SK-N-SH (cell line): ENCODE measurements at regions of chr6 and their contacts with region 1.

Region 1: GRCh38 chr6:13643125-13643524 is 28.0 kb downstream of the NOL7 start:
- DNase-seq: no peak
- H3K4me3 ChIP-seq: no peak overlapping the region
- H3K27ac ChIP-seq: no peak overlapping the region
- H3K4me1 ChIP-seq: no peaks in the 10 kb centered on the region; a peak in 2 of 4 replicates
- H3K27me3 ChIP-seq: no peaks in the 10 kb centered on the region
- CTCF ChIP-seq: no peak
- EP300 ChIP-seq: no peak
- RAD21 ChIP-seq: no peak

Region 2: GRCh38 chr6:13336553-13336952 is 306.6 kb before region 1 on chr6:
- CTCF ChIA-PET with region 1: no interaction called
- POLR2A ChIA-PET with region 1: no interaction called
- DNase-seq: peak; percentile 80
- H3K4me3 ChIP-seq: no peak overlapping the region; a peak in 1 of 4 replicates
- H3K27ac ChIP-seq: no peak overlapping the region
- H3K4me1 ChIP-seq: peaks cover 0 to 4% of the 10 kb centered on the region in 2 experiments; a peak in 2 of 4 replicates
- H3K27me3 ChIP-seq: no peaks in the 10 kb centered on the region
- CTCF ChIP-seq: peak; percentile 91
- EP300 ChIP-seq: no peak
- RAD21 ChIP-seq: peak; percentile 99

Region 3: DNA sequence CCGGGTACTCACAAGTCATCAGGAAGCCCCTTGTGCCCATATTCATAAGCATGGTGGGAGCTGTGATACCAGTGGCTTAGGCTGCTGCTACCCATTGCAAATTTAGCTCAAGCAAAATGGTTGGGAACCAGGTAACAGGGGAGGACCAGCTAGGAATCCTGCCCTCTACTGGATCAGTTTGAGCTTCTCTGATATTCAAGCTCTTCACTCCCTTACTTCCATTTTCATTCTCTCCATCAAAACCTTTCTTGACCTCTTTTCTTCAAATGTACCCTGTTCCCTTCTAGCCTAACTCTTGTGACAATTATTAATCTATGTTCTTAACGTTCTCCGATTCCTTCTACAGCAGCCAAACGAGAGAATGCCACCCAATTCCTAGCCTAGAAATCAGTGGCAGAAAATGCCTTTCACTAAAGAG is 18.2 kb before region 1 on chr6:
- CTCF ChIA-PET with region 1: interaction called, 11 read pairs
- POLR2A ChIA-PET with region 1: no interaction called
- DNase-seq: peak; percentile 53
- H3K4me3 ChIP-seq: no peak overlapping the region; a peak in 1 of 4 replicates
- H3K27ac ChIP-seq: no peak overlapping the region; a peak in 1 of 4 replicates
- H3K4me1 ChIP-seq: no peaks in the 10 kb centered on the region
- H3K27me3 ChIP-seq: no peaks in the 10 kb centered on the region
- CTCF ChIP-seq: peak; percentile 66
- EP300 ChIP-seq: no peak
- RAD21 ChIP-seq: peak; percentile 46

Region 4: GRCh38 chr6:13892007-13892645 is 249.0 kb after region 1 on chr6:
- CTCF ChIA-PET with region 1: no interaction called
- POLR2A ChIA-PET with region 1: no interaction called
- DNase-seq: no peak
- H3K4me3 ChIP-seq: no peak overlapping the region
- H3K27ac ChIP-seq: no peak overlapping the region
- H3K4me1 ChIP-seq: no peaks in the 10 kb centered on the region
- H3K27me3 ChIP-seq: no peaks in the 10 kb centered on the region; the same call in 1 of the 2 replicates
- CTCF ChIP-seq: no peak
- EP300 ChIP-seq: no peak
- RAD21 ChIP-seq: no peak